Gastrocnemius medialis (tissue), 4 donors: ENCODE measurements at regions of chrX and their contacts with region 1.

Region 1: GRCh38 chrX:118459494-118459893 is 36.1 kb upstream of the DOCK11 start:
- DNase-seq: no peak
- ATAC-seq: no peak
- H3K4me3 ChIP-seq: no peak overlapping the region
- H3K27ac ChIP-seq: no peak overlapping the region
- H3K4me1 ChIP-seq: no peaks in the 10 kb centered on the region
- H3K27me3 ChIP-seq: no peaks in the 10 kb centered on the region
- CTCF ChIP-seq: peak in 2 of 5 experiments; percentile 28 to 29
- POLR2A ChIP-seq: no peak

Region 2: GRCh38 chrX:118577041-118577440 is 117.5 kb after region 1 on chrX:
- in situ Hi-C with region 1: loop called in 1 of 4 experiments (anchors 25 kb)
- intact Hi-C with region 1: no loop called
- DNase-seq: no peak
- ATAC-seq: no peak
- H3K4me3 ChIP-seq: no peak overlapping the region
- H3K27ac ChIP-seq: no peak overlapping the region
- H3K4me1 ChIP-seq: no peaks in the 10 kb centered on the region
- H3K27me3 ChIP-seq: no peaks in the 10 kb centered on the region
- CTCF ChIP-seq: no peak
- POLR2A ChIP-seq: no peak

Region 3: DNA sequence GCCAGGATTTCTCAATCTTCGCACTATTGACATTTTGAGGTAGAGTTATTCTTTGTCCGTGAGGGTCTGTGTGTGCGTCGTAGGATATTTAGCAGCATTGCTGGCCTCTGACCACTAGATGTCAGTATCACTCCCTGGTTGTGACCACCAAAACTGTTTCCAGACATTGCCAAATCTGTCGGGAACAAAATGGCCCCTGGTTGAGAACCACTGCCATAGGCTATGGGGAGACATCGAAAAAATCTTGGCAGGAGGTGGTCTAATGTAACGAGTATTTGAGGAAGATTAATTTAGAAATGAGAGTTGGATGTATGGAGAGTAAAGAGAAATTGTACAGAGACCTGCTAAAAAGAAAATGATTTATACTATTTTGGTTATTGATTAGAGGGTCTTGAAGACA is 144.5 kb after region 1 on chrX:
- in situ Hi-C with region 1: loop called in 2 of 4 experiments (anchors 10 to 25 kb)
- intact Hi-C with region 1: loop called (anchors 10 kb)
- DNase-seq: peak; percentile 3 to 36
- ATAC-seq: peak; percentile 75 to 95
- H3K4me3 ChIP-seq: peak overlapping the region in 1 of 4 donors; percentile 34
- H3K27ac ChIP-seq: no peak overlapping the region
- H3K4me1 ChIP-seq: no peaks in the 10 kb centered on the region
- H3K27me3 ChIP-seq: no peaks in the 10 kb centered on the region
- CTCF ChIP-seq: peak; percentile 45 to 77 (median 66)
- POLR2A ChIP-seq: no peak

Region 4: GRCh38 chrX:118637997-118638396 is 178.5 kb after region 1 on chrX:
- in situ Hi-C with region 1: no loop called
- intact Hi-C with region 1: no loop called
- DNase-seq: no peak
- ATAC-seq: no peak
- H3K4me3 ChIP-seq: no peak overlapping the region
- H3K27ac ChIP-seq: no peak overlapping the region
- H3K4me1 ChIP-seq: no peaks in the 10 kb centered on the region
- H3K27me3 ChIP-seq: no peaks in the 10 kb centered on the region
- CTCF ChIP-seq: no peak
- POLR2A ChIP-seq: no peak

Region 5: GRCh38 chrX:118807151-118808017 is 347.9 kb after region 1 on chrX:
- in situ Hi-C with region 1: loop called in 2 of 4 experiments (anchors 25 kb)
- intact Hi-C with region 1: no loop called
- DNase-seq: peak; percentile 4 to 29
- ATAC-seq: peak in 1 of 2 donors; percentile 53
- H3K4me3 ChIP-seq: no peak overlapping the region
- H3K27ac ChIP-seq: no peak overlapping the region
- H3K4me1 ChIP-seq: no peaks in the 10 kb centered on the region
- H3K27me3 ChIP-seq: no peaks in the 10 kb centered on the region
- CTCF ChIP-seq: peak; percentile 53 to 67 (median 66)
- POLR2A ChIP-seq: no peak